Activated CD4-positive, alpha-beta memory T cell treated with anti-CD3 and anti-CD28 coated beads, Interleukin-2, amount 10 ng/mL, durations not matched to agents 7 days and 5 days (primary cell): ENCODE measurements at regions of chr6 and their contacts with region 1.

Region 1: DNA sequence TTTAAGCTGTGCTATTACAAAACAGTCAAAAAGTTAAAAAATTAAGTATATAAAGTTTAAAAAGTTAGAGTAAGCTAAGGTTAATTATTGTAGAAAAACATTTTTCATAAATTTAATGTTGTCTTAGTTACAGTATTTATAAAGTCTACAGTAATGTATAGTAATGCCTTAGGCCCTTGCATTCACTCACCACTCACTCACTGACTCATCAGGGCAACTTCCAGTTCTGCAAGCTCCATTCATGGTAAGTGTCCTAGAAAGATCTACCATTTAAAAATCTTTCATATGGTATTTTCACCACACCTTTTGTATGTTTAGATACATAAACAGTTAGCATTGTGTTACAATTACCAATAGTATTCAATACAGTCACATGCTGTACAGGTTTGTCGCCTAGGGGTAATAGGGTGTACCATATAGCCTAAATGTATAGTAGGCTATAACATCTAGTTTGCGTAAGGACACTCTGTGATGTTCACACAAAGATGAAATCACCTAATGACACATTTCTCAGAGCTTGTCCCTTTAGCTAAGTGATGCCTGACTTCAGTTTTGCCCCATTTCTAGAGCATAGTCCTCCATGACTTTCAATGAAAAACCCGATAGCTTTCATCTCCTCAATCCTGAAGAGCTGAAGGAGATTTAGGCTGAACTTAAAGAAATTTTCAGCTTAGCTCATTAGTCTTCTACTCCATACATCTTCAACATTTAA is 14.9 kb upstream of the HLA-DRA start:
- DNase-seq: no peak
- H3K4me3 Mint-ChIP-seq: no peak overlapping the region
- H3K27ac Mint-ChIP-seq: no peak overlapping the region
- H3K4me1 Mint-ChIP-seq: peaks cover under 1% of the 10 kb centered on the region
- H3K27me3 Mint-ChIP-seq: peaks cover 43% of the 10 kb centered on the region

Region 2: GRCh38 chr6:32785781-32786533 is 361.2 kb after region 1 on chr6:
- CTCF ChIA-PET with region 1: interaction called, 113 read pairs
- POLR2A ChIA-PET with region 1: no interaction called
- DNase-seq: peak; percentile 43
- H3K4me3 Mint-ChIP-seq: no peak overlapping the region
- H3K27ac Mint-ChIP-seq: no peak overlapping the region
- H3K4me1 Mint-ChIP-seq: peaks cover 3% of the 10 kb centered on the region
- H3K27me3 Mint-ChIP-seq: peaks cover 63% of the 10 kb centered on the region